ENCODE measurements at regions of chr13 and their contacts with region 1.

Region 1: DNA sequence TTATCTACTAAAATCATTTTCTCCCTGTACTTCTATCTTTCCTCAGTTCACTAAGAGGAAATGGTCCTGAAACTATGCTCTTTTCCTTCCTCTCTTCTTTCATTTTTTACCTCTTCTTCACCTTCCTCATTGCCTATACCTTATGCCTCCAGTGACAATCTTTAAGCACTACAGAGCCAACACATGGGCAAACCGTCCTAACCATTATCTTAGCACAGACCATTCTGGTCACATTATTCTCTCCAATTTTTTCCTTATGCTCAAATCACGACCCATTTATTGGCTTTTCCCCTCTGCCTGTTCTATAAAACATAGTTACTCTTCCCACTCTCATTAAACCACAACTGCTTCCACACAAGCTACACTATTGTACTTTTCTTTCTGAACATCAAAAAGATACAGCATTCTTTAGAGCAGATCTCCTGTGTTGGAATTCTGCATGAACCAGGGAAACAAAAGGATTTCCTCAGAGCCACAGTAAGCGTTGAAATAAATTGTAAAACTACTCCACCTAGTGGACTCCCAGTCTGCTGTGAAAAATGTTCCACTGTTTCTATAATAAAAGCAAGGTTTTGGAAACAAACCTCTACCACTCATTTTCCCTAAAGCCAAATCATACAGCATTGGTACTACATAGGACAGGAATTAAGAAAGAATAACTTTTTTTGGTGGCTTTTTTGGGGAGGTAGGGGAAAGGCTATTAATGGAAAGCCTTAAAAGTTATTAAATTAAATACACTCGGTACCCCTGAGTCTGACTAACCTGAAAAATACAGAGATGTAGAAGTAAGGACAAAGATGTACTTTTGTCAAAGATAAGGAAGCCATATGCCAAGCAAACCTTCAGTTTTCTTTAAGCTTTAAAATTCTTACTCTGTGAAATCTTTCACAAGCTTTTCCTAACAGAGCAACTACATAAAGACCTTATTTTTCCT is 19.5 kb downstream of the NUFIP1 start:
- DNase-seq: no peak
- H3K4me3 ChIP-seq: no peak overlapping the region
- H3K27ac ChIP-seq: peak overlapping the region in 2 of 4 donors; percentile 23 to 39
- H3K4me1 ChIP-seq: peaks cover 0 to 22% (median 0%) of the 10 kb centered on the region in 3 donors
- H3K27me3 ChIP-seq: no peaks in the 10 kb centered on the region
- CTCF ChIP-seq: peak; percentile 71 to 87 (median 78)
- POLR2A ChIP-seq: no peak

Region 2: GRCh38 chr13:44484562-44485138 is 485.2 kb before region 1 on chr13:
- intact Hi-C with region 1: loop called (anchors 5 kb)
- DNase-seq: no peak
- H3K4me3 ChIP-seq: peak overlapping the region in 1 of 4 donors; percentile 5
- H3K27ac ChIP-seq: no peak overlapping the region
- H3K4me1 ChIP-seq: no peaks in the 10 kb centered on the region
- H3K27me3 ChIP-seq: no peaks in the 10 kb centered on the region
- CTCF ChIP-seq: no peak
- POLR2A ChIP-seq: no peak

Region 3: GRCh38 chr13:44577236-44578066 is 392.4 kb before region 1 on chr13:
- intact Hi-C with region 1: loop called (anchors 10 kb)
- DNase-seq: peak; percentile 68
- H3K4me3 ChIP-seq: peak overlapping the region; percentile 75 to 97 (median 94)
- H3K27ac ChIP-seq: peak overlapping the region; percentile 93 to 99 (median 97)
- H3K4me1 ChIP-seq: peaks cover 19 to 45% (median 27%) of the 10 kb centered on the region in 3 donors
- H3K27me3 ChIP-seq: no peaks in the 10 kb centered on the region
- CTCF ChIP-seq: peak in 2 of 6 experiments; percentile 5 to 19
- POLR2A ChIP-seq: peak in 2 of 4 donors; percentile 71 to 79

Measured in esophagus squamous epithelium (tissue), 5 donors.